Activated T-helper 1 cell treated with anti-CD3 and anti-CD28 coated beads, Interleukin-12 subunit alpha, Interleukin-12 subunit beta, Interleukin-2, Interleukin-4 antibody, amounts not matched to agents 30 ng/mL and 10 ng/mL and 1 ng/mL, durations not matched to agents 14 hours and 24 hours and 36 hours (primary cell): ENCODE measurements at regions of chr6 and their contacts with region 1.

Region 1: DNA sequence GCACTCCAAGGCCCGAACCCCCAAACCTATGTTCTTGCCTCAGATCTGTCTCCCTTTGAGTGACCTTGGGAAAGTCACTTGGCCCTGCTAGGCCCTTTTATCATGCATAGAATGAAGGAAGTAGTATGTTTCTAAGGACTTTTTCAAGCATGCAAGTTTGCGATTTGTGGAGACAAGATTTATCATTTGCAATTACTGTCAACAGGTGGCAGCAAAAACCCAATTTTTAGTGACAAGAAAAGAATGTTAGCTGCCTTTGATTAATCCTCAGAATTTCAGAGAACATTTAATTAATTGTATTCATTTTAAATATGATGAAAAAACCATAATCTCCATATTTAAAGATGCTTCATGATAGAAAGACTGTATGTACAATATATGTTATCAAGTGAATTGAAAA is 28.3 kb upstream of the PREP start:
- DNase-seq: peak; percentile 12
- H3K4me3 Mint-ChIP-seq: no peak overlapping the region
- H3K27ac Mint-ChIP-seq: no peak overlapping the region
- H3K4me1 Mint-ChIP-seq: peaks cover 5% of the 10 kb centered on the region
- H3K27me3 Mint-ChIP-seq: peaks cover 35% of the 10 kb centered on the region

Region 2: DNA sequence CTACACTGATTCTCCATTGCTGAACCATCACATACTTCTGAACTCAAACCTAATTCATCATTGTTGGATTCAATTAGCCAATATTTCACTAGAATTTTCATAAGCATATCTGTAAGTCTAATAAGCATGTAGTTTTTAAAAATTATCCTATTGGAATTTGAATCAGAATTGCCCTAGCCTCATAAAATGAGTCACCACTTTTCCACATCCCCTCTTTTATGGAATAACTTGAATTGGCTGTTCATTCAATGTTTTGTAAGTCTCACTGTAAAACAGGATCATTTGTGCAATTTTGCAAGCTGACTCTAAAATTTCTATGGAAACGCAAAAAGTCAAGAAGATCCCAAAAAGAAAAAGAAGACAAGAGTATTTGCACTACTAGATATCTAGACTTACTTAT is 712.6 kb before region 1 on chr6:
- intact Hi-C with region 1: no loop called
- DNase-seq: no peak
- H3K4me3 Mint-ChIP-seq: no peak overlapping the region
- H3K27ac Mint-ChIP-seq: no peak overlapping the region
- H3K4me1 Mint-ChIP-seq: no peaks in the 10 kb centered on the region
- H3K27me3 Mint-ChIP-seq: peaks cover 1% of the 10 kb centered on the region

Region 3: GRCh38 chr6:105389543-105389942 is 41.7 kb before region 1 on chr6:
- intact Hi-C with region 1: no loop called
- DNase-seq: no peak
- H3K4me3 Mint-ChIP-seq: no peak overlapping the region
- H3K27ac Mint-ChIP-seq: no peak overlapping the region
- H3K4me1 Mint-ChIP-seq: peaks cover 5% of the 10 kb centered on the region
- H3K27me3 Mint-ChIP-seq: no peaks in the 10 kb centered on the region

Region 4: DNA sequence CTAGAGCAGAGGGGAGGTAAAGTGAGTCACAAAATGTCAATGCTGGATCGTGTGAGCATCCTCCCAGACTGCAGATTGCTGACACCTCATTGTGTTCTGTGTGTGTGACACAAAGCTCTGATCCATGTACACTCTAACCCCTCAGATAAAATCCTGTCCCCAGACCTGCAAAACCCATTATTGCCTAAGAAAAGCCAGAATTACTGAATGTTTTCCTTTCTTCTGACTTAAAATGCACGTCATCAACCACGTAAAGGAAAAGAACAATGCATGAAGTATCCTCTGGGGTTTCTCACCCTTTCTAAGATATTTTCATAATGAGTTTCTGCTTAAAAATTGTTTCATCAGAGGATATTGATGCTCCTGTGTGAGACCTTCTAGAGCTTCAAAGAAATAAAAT is 189.7 kb after region 1 on chr6:
- intact Hi-C with region 1: loop called (anchors 2 kb)
- DNase-seq: peak; percentile 19
- H3K4me3 Mint-ChIP-seq: peak overlapping the region; percentile 46
- H3K27ac Mint-ChIP-seq: peak overlapping the region; percentile 91
- H3K4me1 Mint-ChIP-seq: peaks cover 46% of the 10 kb centered on the region
- H3K27me3 Mint-ChIP-seq: peaks cover 2% of the 10 kb centered on the region

Region 5: GRCh38 chr6:105733565-105734162 is 302.4 kb after region 1 on chr6:
- intact Hi-C with region 1: loop called (anchors 2 kb)
- DNase-seq: no peak
- H3K4me3 Mint-ChIP-seq: no peak overlapping the region
- H3K27ac Mint-ChIP-seq: no peak overlapping the region
- H3K4me1 Mint-ChIP-seq: peaks cover 44% of the 10 kb centered on the region
- H3K27me3 Mint-ChIP-seq: peaks cover 3% of the 10 kb centered on the region

Region 6: GRCh38 chr6:105793130-105793529 is 361.9 kb after region 1 on chr6:
- intact Hi-C with region 1: loop called (anchors 5 kb)
- DNase-seq: no peak
- H3K4me3 Mint-ChIP-seq: peak overlapping the region; percentile 5
- H3K27ac Mint-ChIP-seq: peak overlapping the region; percentile 66
- H3K4me1 Mint-ChIP-seq: peaks cover 86% of the 10 kb centered on the region
- H3K27me3 Mint-ChIP-seq: no peaks in the 10 kb centered on the region

Region 7: DNA sequence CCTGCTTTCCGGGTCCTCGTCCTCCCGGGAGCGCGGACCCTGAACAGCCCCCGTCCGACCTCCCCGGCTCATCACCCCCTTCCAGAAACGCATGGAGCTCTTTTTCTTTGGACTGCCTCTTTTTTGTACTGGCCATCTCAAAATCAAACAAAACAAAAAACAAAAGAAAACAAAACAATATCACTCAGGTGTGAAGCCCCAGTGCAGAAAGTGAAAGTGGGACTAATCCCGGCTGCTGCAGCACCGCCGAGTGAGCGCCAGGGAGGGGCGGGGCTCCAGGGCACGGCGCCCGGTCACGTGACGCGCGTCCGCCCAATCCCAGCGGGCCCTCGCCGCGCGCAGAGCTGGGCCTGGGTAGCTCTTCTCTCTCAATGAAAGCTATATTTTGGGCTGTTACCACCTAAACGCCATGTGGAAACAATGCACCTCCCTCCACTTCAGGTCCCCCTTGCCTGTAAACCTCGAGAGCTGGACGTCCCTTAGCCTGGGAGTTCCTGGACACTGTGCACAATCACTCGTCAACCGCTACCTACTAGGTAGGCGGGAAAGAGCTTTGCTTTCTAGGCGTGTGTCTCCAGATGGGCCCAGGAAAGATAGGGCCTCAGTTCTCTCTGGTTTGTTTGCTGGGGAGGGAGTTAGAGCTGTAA is 561.2 kb after region 1 on chr6:
- intact Hi-C with region 1: loop called (anchors 5 kb)
- DNase-seq: peak; percentile 91
- H3K4me3 Mint-ChIP-seq: peak overlapping the region; percentile 89
- H3K27ac Mint-ChIP-seq: peak overlapping the region; percentile 96
- H3K4me1 Mint-ChIP-seq: peaks cover 66% of the 10 kb centered on the region
- H3K27me3 Mint-ChIP-seq: peaks cover 24% of the 10 kb centered on the region

Region 8: GRCh38 chr6:106300944-106301343 is 869.7 kb after region 1 on chr6:
- intact Hi-C with region 1: loop called (anchors 1 kb)
- DNase-seq: no peak
- H3K4me3 Mint-ChIP-seq: no peak overlapping the region
- H3K27ac Mint-ChIP-seq: no peak overlapping the region
- H3K4me1 Mint-ChIP-seq: peaks cover 14% of the 10 kb centered on the region
- H3K27me3 Mint-ChIP-seq: no peaks in the 10 kb centered on the region

Region 9: GRCh38 chr6:106568530-106568929 is 1137.3 kb after region 1 on chr6:
- intact Hi-C with region 1: loop called (anchors 5 kb)
- DNase-seq: no peak
- H3K4me3 Mint-ChIP-seq: no peak overlapping the region
- H3K27ac Mint-ChIP-seq: no peak overlapping the region
- H3K4me1 Mint-ChIP-seq: no peaks in the 10 kb centered on the region
- H3K27me3 Mint-ChIP-seq: no peaks in the 10 kb centered on the region